CD4-positive, alpha-beta T cell (primary cell): ENCODE measurements at regions of chr5 and their contacts with region 1.

Region 1: GRCh38 chr5:152527358-152528052 is 122.4 kb upstream of the NMUR2 start:
- DNase-seq: peak in 2 of 14 experiments; percentile 5 to 40
- ATAC-seq: no peak
- H3K4me3 ChIP-seq: no peak overlapping the region
- H3K4me3 Mint-ChIP-seq: no peak overlapping the region
- H3K27ac ChIP-seq: no peak overlapping the region
- H3K27ac Mint-ChIP-seq: no peak overlapping the region
- H3K4me1 ChIP-seq: peaks cover 7% of the 10 kb centered on the region
- H3K4me1 Mint-ChIP-seq: peaks cover 9% of the 10 kb centered on the region
- H3K27me3 ChIP-seq: no peaks in the 10 kb centered on the region
- H3K27me3 Mint-ChIP-seq: no peaks in the 10 kb centered on the region
- CTCF ChIP-seq: no peak

Region 2: DNA sequence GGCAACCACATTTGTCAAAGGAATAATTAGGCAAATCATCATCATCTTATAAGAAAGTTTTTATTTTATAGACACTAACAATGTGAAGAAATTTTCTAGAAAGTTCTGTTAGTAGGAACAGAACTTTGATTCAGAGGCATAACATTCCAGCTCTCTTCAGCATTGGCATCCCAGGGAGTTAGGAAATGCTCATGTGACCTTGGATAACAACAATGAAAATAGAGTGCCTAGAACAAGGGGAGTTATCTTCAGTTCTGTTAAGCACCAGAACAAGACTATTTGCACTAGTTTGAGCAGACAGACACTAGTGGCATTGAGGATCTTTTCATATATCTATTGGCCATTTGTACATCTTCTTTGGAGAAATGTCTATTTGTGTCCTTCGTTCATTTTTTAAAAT is 115.4 kb before region 1 on chr5:
- CTCF ChIA-PET with region 1: no interaction called
- POLR2A ChIA-PET with region 1: no interaction called
- intact Hi-C with region 1: no loop called
- DNase-seq: no peak
- ATAC-seq: no peak
- H3K4me3 ChIP-seq: no peak overlapping the region
- H3K4me3 Mint-ChIP-seq: no peak overlapping the region
- H3K27ac ChIP-seq: no peak overlapping the region
- H3K27ac Mint-ChIP-seq: no peak overlapping the region
- H3K4me1 ChIP-seq: no peaks in the 10 kb centered on the region
- H3K4me1 Mint-ChIP-seq: no peaks in the 10 kb centered on the region
- H3K27me3 ChIP-seq: no peaks in the 10 kb centered on the region
- H3K27me3 Mint-ChIP-seq: peaks cover 10% of the 10 kb centered on the region
- CTCF ChIP-seq: no peak

Region 3: GRCh38 chr5:153654504-153655200 is 1127.1 kb after region 1 on chr5:
- CTCF ChIA-PET with region 1: no interaction called
- POLR2A ChIA-PET with region 1: no interaction called
- intact Hi-C with region 1: loop called in 1 of 2 experiments (anchors 5 kb)
- DNase-seq: no peak
- ATAC-seq: no peak
- H3K4me3 ChIP-seq: no peak overlapping the region
- H3K4me3 Mint-ChIP-seq: no peak overlapping the region
- H3K27ac ChIP-seq: no peak overlapping the region
- H3K27ac Mint-ChIP-seq: no peak overlapping the region
- H3K4me1 ChIP-seq: no peaks in the 10 kb centered on the region
- H3K4me1 Mint-ChIP-seq: no peaks in the 10 kb centered on the region
- H3K27me3 ChIP-seq: no peaks in the 10 kb centered on the region
- H3K27me3 Mint-ChIP-seq: no peaks in the 10 kb centered on the region
- CTCF ChIP-seq: no peak